Right ventricle myocardium inferior (tissue), 1 donor: ENCODE measurements at regions of chr10 and their contacts with region 1.

Region 1: DNA sequence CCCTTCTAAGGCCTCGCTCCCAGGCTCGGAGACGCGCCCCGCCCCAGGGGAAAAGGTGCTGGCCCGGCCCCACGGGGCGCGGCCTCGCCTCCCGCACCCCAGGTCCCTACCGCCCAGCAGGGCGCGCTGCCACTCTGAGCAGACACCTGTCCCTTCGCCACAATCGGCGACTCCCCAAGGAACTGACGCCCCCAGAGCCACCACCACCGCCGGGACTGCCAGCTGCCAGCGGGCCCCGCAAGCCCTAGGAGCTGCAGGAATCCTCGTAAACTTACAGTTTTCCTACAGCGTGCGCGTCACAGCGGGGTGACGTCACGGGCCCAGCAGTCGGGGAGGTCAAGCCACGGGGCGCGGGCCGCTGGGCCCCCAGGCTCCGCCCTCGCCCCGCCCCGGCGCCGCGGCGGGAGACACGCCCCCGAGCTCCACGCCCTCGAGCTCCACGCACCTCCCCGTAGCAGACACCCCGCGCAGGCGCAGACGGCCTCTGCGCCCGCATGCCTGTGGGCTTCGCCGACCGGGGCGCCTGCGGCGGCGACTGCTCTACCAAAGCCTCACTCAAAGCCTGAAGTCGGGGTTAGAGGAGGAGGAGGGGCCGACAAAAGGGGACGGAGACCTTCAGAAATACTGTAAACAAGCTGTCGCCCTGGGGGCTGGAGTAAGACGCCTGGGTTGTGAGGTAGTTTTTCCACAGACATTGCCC is at the start of gene ZNF438:
- DNase-seq: peak; percentile 99
- ATAC-seq: peak; percentile 97
- total RNA-seq, gene ZNF438: 12.8 TPM

Region 2: GRCh38 chr10:30857803-30858202 is 173.9 kb before region 1 on chr10:
- intact Hi-C with region 1: loop called (anchors 2 kb)
- DNase-seq: peak; percentile 84
- ATAC-seq: peak; percentile 96

Region 3: GRCh38 chr10:30970760-30971460 is 60.8 kb before region 1 on chr10:
- intact Hi-C with region 1: loop called (anchors 5 kb)
- DNase-seq: no peak
- ATAC-seq: peak; percentile 83

Region 4: DNA sequence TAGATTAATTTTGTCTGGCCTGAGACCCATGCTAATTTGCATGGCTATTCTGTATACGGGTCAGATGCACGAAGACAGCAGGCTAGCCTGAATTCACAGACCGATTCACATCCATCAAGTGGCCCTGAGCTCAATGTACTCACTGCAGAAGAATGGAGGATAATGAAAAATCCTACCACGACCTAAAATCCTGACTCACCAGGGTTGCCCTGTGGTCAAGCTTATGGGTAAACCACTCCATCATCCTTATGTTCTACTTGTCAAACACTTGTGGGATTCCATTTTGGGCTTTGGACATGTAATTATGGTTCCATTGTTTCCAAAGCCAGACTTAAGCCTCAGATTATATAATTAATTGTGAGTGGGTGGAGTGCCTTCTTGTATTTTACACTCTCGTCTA is 110.3 kb after region 1 on chr10:
- intact Hi-C with region 1: no loop called
- DNase-seq: no peak
- ATAC-seq: no peak

Region 5: GRCh38 chr10:31318854-31319601 is 287.3 kb after region 1 on chr10 and contains the start of gene ZEB1:
- intact Hi-C with region 1: loop called (anchors 2 kb)
- DNase-seq: peak; percentile 90
- ATAC-seq: peak; percentile 82
- total RNA-seq, gene ZEB1: 75.5 TPM

Region 6: GRCh38 chr10:31490858-31491504 is 459.3 kb after region 1 on chr10:
- intact Hi-C with region 1: loop called (anchors 5 kb)
- DNase-seq: no peak
- ATAC-seq: no peak